Heart left ventricle (tissue), 16 donors: ENCODE measurements at regions of chr15 and their contacts with region 1.

Region 1: DNA sequence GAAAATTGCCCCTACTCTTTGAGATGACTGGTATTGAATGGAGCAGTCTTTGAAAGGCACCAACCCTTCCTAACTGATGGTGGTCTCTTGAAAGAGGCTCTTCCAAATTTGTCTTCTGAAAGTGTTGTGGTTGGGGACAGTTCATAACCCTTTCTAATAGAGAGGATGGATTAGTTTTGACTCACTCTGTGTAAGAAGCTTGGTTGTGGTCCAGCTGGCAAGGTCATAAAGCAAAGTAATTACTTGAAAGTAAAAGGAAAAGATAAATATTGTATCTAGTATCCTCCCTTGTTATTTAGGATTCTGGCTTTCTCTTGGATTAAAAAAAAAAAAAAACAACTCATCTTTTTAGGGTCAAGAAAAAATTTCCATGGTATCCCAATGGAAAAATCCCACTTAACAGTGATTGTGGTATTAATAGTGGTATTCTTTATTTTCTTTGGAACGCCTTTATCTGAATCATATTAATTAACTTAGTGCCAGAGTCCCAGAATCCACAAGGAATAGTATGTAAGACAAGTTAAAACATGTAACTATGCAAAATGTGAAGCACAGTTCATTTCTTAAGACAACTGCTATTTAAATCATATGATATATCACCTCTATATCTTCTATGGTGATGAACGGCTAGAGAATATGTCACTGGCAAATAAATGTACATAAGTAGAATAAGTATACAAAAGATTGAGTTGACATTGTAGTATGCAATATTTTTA is 469.3 kb upstream of the CDIN1 start:
- DNase-seq: no peak
- ATAC-seq: no peak
- H3K4me3 ChIP-seq: no peak overlapping the region
- H3K27ac ChIP-seq: no peak overlapping the region
- H3K4me1 ChIP-seq: peaks cover 0 to 16% (median 0%) of the 10 kb centered on the region in 12 donors
- H3K27me3 ChIP-seq: no peaks in the 10 kb centered on the region
- CTCF ChIP-seq: no peak
- POLR2A ChIP-seq: no peak

Region 2: GRCh38 chr15:36050899-36051298 is 59.2 kb before region 1 on chr15:
- intact Hi-C with region 1: loop called in 1 of 10 experiments (anchors 10 kb)
- DNase-seq: no peak
- ATAC-seq: no peak
- H3K4me3 ChIP-seq: no peak overlapping the region
- H3K27ac ChIP-seq: no peak overlapping the region
- H3K4me1 ChIP-seq: no peaks in the 10 kb centered on the region
- H3K27me3 ChIP-seq: no peaks in the 10 kb centered on the region
- CTCF ChIP-seq: no peak
- POLR2A ChIP-seq: no peak